Activated CD4-positive, alpha-beta T cell treated with anti-CD3 and anti-CD28 coated beads for 36 hours (primary cell): ENCODE measurements at regions of chr3 and their contacts with region 1.

Region 1: DNA sequence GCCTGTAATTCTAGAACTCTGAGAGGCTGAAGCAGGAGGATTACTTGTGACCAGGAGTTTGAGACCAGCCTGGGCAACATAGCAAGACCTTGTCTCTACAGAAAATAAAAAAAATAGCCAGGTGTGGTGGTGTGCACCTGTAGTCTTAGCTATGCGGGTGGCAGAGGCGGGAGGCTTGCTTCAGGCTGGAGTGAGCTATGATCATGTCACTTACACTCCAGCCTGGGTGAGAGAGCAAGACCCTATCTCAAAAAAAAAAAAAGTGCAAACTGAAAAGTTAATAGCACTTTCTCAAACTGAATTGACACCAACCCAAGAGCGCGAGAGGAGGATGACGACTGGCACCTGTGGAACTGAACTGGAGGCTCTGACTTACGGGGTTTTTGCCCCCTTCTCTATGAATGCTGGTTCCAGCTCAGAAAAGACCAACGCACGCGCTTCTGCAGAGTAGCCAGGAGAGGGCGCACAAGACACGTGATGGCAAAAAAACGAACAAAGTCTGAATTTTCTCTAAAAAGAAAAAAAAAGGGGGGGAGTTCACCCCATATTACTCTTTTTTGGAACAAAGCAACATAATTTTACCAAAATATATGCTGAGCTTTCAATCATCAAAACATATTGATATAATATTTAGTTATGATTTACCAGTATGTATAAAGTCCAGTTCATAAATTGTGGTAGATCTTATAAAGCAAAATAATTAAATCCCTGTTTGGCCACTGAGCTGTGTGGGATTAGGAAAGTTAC is 23.7 kb downstream of the CFAP92 start:
- DNase-seq: peak; percentile 80
- ATAC-seq: peak; percentile 74
- H3K4me3 Mint-ChIP-seq: no peak overlapping the region
- H3K27ac Mint-ChIP-seq: no peak overlapping the region
- H3K4me1 Mint-ChIP-seq: peaks cover 3% of the 10 kb centered on the region
- H3K27me3 Mint-ChIP-seq: no peaks in the 10 kb centered on the region

Region 2: DNA sequence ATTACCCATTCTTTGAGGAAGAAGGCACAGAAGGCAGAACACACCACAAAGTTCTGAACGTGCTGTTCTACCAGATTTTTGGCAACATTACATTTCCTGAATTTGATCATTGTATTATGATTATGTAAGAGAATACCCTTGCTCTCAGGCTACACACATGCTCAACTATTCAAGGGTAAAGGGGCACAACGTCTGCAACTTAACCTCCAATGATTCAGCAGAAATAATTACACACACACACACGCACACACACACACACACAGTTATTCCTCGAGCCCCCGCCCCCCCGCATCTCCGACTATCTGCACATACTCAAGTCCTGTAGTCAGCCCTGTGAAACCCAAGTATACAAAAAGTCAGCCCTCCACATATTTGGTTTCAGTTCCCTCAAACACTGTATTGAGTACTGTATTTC is 346.4 kb before region 1 on chr3:
- CTCF ChIA-PET with region 1: no interaction called
- POLR2A ChIA-PET with region 1: no interaction called
- intact Hi-C with region 1: no loop called
- DNase-seq: no peak
- ATAC-seq: no peak
- H3K4me3 Mint-ChIP-seq: no peak overlapping the region
- H3K27ac Mint-ChIP-seq: peak overlapping the region; percentile 65
- H3K4me1 Mint-ChIP-seq: peaks cover 24% of the 10 kb centered on the region
- H3K27me3 Mint-ChIP-seq: no peaks in the 10 kb centered on the region

Region 3: DNA sequence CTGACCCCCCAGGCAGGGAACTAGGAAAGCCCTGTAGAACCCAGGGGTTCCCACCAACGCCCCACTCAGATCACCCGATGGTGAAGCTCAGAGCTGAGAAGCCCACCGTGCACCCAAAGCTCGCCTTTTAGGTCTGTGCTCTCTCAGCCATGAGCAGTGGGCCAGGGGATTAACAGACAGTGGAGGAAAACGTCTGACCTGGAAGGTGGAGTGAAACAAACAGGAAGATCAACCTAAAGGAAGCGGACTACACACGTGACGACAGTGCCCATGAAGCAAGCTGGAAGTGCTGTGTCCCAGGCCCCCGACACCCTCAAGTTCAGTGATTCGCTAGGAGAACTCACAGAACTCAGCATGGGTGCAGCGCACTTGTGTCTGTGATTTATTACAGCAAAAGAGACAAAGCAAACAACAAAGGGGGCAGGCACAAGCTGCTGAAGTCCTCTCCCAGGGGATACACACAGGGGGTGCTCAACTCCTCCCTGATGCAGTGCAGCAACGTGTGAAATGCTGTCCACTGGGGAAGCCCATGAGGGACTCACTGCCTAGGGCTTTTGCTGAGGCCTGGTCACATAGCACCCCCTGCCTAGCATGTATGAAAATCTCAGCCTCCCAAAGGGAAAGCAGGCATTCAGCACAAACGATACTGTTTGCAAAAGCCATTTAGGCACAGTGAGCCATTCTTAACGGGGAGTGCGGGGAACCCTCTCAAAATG is 19.8 kb before region 1 on chr3:
- CTCF ChIA-PET with region 1: interaction called, 12 read pairs
- POLR2A ChIA-PET with region 1: no interaction called
- intact Hi-C with region 1: no loop called
- DNase-seq: peak; percentile 61
- ATAC-seq: peak; percentile 89
- H3K4me3 Mint-ChIP-seq: no peak overlapping the region
- H3K27ac Mint-ChIP-seq: no peak overlapping the region
- H3K4me1 Mint-ChIP-seq: no peaks in the 10 kb centered on the region
- H3K27me3 Mint-ChIP-seq: no peaks in the 10 kb centered on the region

Region 4: DNA sequence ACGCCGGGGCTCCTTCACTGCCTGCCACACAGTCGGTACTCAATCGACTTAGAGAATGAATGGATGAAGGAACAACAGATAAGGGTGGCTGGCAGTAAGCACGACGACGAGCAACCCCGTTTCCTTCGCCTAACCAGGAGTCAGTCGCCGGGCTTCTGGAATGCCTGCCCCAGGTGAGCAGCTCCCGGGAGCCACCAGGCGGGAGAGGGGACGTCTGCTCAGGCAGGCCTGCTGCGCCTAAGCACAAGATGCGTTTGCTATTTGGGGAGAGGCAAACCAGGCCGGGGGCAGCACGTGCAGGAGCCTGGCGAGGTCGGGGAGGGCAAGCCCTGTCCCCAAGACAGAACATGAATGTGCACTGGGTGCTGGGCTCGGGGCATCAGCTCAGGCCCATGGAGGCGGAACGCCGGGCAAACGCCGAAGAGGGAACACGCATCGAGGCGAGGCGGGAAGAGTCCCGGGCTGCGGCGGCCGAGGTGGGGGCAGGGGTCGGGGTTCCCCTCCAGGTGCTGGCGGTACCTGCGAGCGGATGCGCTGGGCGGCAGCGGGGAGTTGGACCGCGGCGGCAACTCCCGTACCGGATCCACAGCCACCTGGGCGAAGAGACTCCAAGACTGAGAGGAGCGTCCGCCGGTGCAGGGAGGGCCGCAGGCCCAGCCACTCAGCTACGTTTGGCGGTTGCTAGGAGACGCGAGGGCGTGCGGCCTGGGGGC is 23.5 kb after region 1 on chr3 and contains the start of gene CFAP92:
- CTCF ChIA-PET with region 1: interaction called, 20 read pairs
- POLR2A ChIA-PET with region 1: no interaction called
- intact Hi-C with region 1: no loop called
- DNase-seq: peak; percentile 95
- ATAC-seq: peak; percentile 97
- H3K4me3 Mint-ChIP-seq: peak within 1 kb of the TSS; percentile 63
- H3K27ac Mint-ChIP-seq: peak within 1 kb of the TSS; percentile 49
- H3K4me1 Mint-ChIP-seq: peaks cover 32% of the 10 kb centered on the region
- H3K27me3 Mint-ChIP-seq: no peaks in the 10 kb centered on the region
- total RNA-seq, gene CFAP92: 0.64 to 0.88 TPM

Region 5: GRCh38 chr3:129016356-129016719 is 46.2 kb after region 1 on chr3:
- CTCF ChIA-PET with region 1: interaction called, 42 read pairs
- POLR2A ChIA-PET with region 1: interaction called, 6 read pairs
- intact Hi-C with region 1: loop called (anchors 1 to 2 kb)
- DNase-seq: peak; percentile 80
- ATAC-seq: peak; percentile 84
- H3K4me3 Mint-ChIP-seq: peak overlapping the region; percentile 63
- H3K27ac Mint-ChIP-seq: peak overlapping the region; percentile 96
- H3K4me1 Mint-ChIP-seq: peaks cover 36% of the 10 kb centered on the region
- H3K27me3 Mint-ChIP-seq: no peaks in the 10 kb centered on the region

Region 6: DNA sequence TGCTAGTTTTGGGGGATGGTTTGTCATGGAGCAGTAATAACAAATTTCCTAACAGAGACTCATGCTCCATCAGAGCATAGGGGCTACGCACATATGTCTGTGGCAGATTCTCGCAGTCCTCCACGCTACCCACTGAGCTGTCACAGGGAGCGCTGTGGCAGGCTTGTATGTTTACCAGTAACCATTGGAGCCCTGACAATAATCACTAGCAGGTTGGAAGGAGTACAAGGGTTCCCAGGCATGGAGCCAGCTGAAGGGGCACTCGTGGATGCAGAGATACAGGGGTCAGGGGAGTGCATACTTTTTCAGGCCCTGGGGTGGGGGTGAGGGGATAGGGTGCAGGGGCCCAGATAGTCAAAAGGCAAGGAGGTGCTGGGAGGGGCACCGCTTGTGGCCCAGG is 82.5 kb after region 1 on chr3:
- CTCF ChIA-PET with region 1: interaction called, 59 read pairs
- POLR2A ChIA-PET with region 1: interaction called, 4 read pairs
- intact Hi-C with region 1: loop called in 1 of 2 experiments (anchors 1 kb)
- DNase-seq: no peak
- ATAC-seq: no peak
- H3K4me3 Mint-ChIP-seq: no peak overlapping the region
- H3K27ac Mint-ChIP-seq: no peak overlapping the region
- H3K4me1 Mint-ChIP-seq: peaks cover 10% of the 10 kb centered on the region
- H3K27me3 Mint-ChIP-seq: no peaks in the 10 kb centered on the region

Region 7: GRCh38 chr3:129316131-129317013 is 346.2 kb after region 1 on chr3:
- CTCF ChIA-PET with region 1: interaction called, 9 read pairs
- POLR2A ChIA-PET with region 1: no interaction called
- intact Hi-C with region 1: loop called in 1 of 2 experiments (anchors 1 kb)
- DNase-seq: peak; percentile 93
- ATAC-seq: peak; percentile 39
- H3K4me3 Mint-ChIP-seq: peak overlapping the region; percentile 88
- H3K27ac Mint-ChIP-seq: peak overlapping the region; percentile 58
- H3K4me1 Mint-ChIP-seq: peaks cover 22% of the 10 kb centered on the region
- H3K27me3 Mint-ChIP-seq: no peaks in the 10 kb centered on the region